Caco-2 (cell line): ENCODE measurements at regions of chr11 and their contacts with region 1.

Region 1: GRCh38 chr11:73350908-73351636 is 25.1 kb upstream of the RELT start:
- DNase-seq: peak in 1 of 2 experiments; percentile 76
- H3K4me3 ChIP-seq: no peak overlapping the region
- H3K4me3 Mint-ChIP-seq: no peak overlapping the region
- H3K27ac Mint-ChIP-seq: no peak overlapping the region
- H3K4me1 ChIP-seq: no peaks in the 10 kb centered on the region
- H3K4me1 Mint-ChIP-seq: no peaks in the 10 kb centered on the region
- H3K27me3 ChIP-seq: no peaks in the 10 kb centered on the region
- H3K27me3 Mint-ChIP-seq: no peaks in the 10 kb centered on the region
- CTCF ChIP-seq: peak; percentile 99

Region 2: DNA sequence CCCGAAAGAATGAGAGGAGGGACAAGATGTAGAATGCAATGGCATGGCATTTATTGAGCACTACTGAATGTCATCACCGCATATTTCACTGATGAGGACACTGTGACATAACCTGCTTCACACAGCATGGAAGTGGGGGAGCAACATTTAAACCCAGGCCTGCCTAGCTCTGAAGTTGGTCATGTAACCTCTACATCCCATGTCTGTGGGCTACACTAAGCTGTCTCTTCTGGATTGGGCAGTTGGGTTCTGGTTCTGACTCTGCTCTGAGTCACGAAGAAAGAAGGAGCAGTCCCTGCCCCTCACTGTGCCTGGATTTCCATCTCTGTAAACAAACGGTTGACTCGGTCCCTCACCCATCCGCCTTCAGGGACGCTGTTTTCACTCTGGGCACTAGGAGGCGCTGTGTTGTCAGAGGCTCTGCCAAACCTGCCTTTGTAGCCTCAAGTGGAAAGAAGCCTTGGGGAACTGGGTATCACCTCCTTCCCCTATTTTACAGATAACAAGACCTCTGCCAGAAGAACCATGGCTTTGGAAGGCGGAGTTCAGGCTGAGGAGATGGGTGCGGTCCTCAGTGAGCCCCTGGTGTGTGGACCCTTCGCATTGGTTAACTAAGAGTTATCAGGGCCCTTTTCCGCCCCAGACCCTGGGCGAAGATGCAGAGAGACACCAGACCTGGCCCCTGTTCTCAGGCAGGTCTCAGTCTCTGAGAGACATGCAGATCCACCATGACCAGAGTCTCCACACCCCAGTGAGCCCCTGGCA is 55.7 kb before region 1 on chr11:
- CTCF ChIA-PET with region 1: interaction called, 18 read pairs
- POLR2A ChIA-PET with region 1: no interaction called
- intact Hi-C with region 1: no loop called
- DNase-seq: peak; percentile 73 to 86
- H3K4me3 ChIP-seq: no peak overlapping the region
- H3K4me3 Mint-ChIP-seq: no peak overlapping the region
- H3K27ac Mint-ChIP-seq: no peak overlapping the region
- H3K4me1 ChIP-seq: peaks cover 23% of the 10 kb centered on the region
- H3K4me1 Mint-ChIP-seq: peaks cover 10% of the 10 kb centered on the region
- H3K27me3 ChIP-seq: no peaks in the 10 kb centered on the region
- H3K27me3 Mint-ChIP-seq: no peaks in the 10 kb centered on the region
- CTCF ChIP-seq: peak; percentile 95 to 97

Region 3: GRCh38 chr11:73314117-73314961 is 36.7 kb before region 1 on chr11:
- CTCF ChIA-PET with region 1: interaction called, 21 read pairs
- POLR2A ChIA-PET with region 1: interaction called, 4 read pairs
- intact Hi-C with region 1: no loop called
- DNase-seq: peak; percentile 88 to 93
- H3K4me3 ChIP-seq: no peak overlapping the region
- H3K4me3 Mint-ChIP-seq: peak overlapping the region; percentile 4
- H3K27ac Mint-ChIP-seq: peak overlapping the region; percentile 35
- H3K4me1 ChIP-seq: peaks cover 51% of the 10 kb centered on the region
- H3K4me1 Mint-ChIP-seq: peaks cover 32% of the 10 kb centered on the region
- H3K27me3 ChIP-seq: no peaks in the 10 kb centered on the region
- H3K27me3 Mint-ChIP-seq: no peaks in the 10 kb centered on the region
- CTCF ChIP-seq: no peak

Region 4: GRCh38 chr11:73335204-73335923 is 15.7 kb before region 1 on chr11:
- CTCF ChIA-PET with region 1: interaction called, 52 read pairs
- POLR2A ChIA-PET with region 1: interaction called, 4 read pairs
- intact Hi-C with region 1: no loop called
- DNase-seq: peak; percentile 91 to 96
- H3K4me3 ChIP-seq: no peak overlapping the region
- H3K4me3 Mint-ChIP-seq: no peak overlapping the region
- H3K27ac Mint-ChIP-seq: peak overlapping the region; percentile 19
- H3K4me1 ChIP-seq: peaks cover 52% of the 10 kb centered on the region
- H3K4me1 Mint-ChIP-seq: peaks cover 36% of the 10 kb centered on the region
- H3K27me3 ChIP-seq: no peaks in the 10 kb centered on the region
- H3K27me3 Mint-ChIP-seq: no peaks in the 10 kb centered on the region
- CTCF ChIP-seq: peak; percentile 100

Region 5: GRCh38 chr11:73365352-73366264 is 14.5 kb after region 1 on chr11:
- CTCF ChIA-PET with region 1: interaction called, 77 read pairs
- POLR2A ChIA-PET with region 1: no interaction called
- intact Hi-C with region 1: no loop called
- DNase-seq: no peak
- H3K4me3 ChIP-seq: no peak overlapping the region
- H3K4me3 Mint-ChIP-seq: no peak overlapping the region
- H3K27ac Mint-ChIP-seq: no peak overlapping the region
- H3K4me1 ChIP-seq: no peaks in the 10 kb centered on the region
- H3K4me1 Mint-ChIP-seq: no peaks in the 10 kb centered on the region
- H3K27me3 ChIP-seq: no peaks in the 10 kb centered on the region
- H3K27me3 Mint-ChIP-seq: no peaks in the 10 kb centered on the region
- CTCF ChIP-seq: no peak

Region 6: DNA sequence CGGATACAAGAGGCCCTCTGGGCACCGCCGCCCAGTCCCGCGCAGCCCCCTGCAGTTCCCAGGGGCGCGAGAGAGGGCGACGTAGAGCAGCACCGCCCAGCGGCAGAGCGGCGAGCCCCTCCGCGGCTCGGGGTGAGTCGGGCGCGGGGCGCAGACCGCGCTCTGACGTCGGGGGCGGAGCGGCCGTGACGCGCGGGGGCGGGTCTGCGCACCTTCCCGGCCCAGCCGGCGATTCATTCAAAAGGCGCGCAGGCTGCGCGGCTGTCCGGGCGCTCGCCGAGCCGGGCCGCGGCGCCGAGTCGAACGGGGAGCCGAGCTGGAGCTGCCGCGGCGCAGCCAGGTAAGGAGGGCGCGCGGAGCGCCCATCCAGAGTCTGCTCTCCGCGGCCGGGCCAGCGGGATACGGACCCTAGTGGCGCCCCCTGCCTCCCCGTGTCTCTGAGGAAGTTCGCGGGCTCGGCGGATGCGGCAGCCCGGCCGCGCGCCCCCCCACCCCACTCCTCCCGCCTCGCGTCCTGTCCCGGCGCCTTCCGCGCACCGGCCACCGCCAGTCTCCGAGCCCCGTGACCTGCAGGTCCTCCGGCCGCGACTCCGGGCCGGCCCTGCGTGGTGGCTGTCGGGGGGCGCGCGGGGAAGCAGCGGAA is 25.2 kb after region 1 on chr11 and contains the start of gene RELT:
- CTCF ChIA-PET with region 1: interaction called, 10 read pairs
- POLR2A ChIA-PET with region 1: no interaction called
- intact Hi-C with region 1: no loop called
- DNase-seq: peak; percentile 92 to 99
- H3K4me3 ChIP-seq: peak within 1 kb of the TSS; percentile 91
- H3K4me3 Mint-ChIP-seq: peak within 1 kb of the TSS; percentile 83
- H3K27ac Mint-ChIP-seq: peak within 1 kb of the TSS; percentile 37
- H3K4me1 ChIP-seq: peaks cover 11% of the 10 kb centered on the region; the same call in 1 of the 2 replicates
- H3K4me1 Mint-ChIP-seq: peaks cover 18% of the 10 kb centered on the region
- H3K27me3 ChIP-seq: no peaks in the 10 kb centered on the region
- H3K27me3 Mint-ChIP-seq: no peaks in the 10 kb centered on the region
- CTCF ChIP-seq: peak; percentile 96 to 98
- total RNA-seq, gene RELT: 11.7 and 12.7 TPM in 2 replicates

Region 7: DNA sequence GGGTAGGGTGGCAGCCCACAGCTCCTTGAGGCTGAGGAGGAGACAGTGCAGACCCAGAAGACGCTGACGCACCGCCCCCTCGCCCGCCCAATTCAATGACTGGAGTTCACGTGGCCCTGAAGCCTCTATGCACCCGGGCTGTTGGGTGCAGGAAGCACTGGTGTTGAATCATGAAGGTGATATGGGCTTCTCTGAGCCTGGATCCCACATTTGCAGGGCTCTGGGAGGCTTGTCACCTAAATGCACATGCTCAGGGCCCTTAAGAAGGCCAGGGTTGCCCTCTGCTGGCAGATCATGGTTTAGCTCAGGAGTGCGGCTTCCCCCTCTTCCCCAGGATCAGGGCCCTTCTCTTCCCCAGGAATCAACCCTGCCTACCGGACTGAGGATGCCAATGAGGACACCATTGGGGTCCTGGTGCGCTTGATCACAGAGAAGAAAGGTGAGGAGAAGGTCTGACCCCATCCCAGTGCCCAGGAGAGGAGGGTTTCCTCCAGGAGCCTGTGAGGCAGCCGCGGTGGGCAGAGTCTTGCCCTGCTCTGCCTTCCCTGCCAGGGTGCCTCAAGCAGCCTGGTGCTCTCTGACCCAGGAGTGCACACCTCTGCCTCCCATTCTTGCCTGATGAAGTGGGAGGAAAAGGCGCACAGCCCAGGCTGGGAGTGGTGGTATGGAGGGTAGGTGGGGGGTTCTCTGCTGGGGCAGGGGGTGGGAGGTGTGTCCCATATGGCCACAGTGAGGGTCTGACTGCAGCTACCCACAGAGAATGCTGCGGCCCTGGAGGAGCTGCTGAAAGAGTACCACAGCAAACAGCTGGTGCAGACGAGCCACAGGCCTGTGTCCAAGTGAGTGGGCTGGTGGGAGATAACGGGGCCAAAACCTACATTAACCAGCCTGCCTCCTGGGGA is 42.7 kb after region 1 on chr11:
- CTCF ChIA-PET with region 1: interaction called, 87 read pairs
- POLR2A ChIA-PET with region 1: no interaction called
- intact Hi-C with region 1: loop called (anchors 1 kb)
- DNase-seq: peak; percentile 85 to 89
- H3K4me3 ChIP-seq: no peak overlapping the region
- H3K4me3 Mint-ChIP-seq: no peak overlapping the region
- H3K27ac Mint-ChIP-seq: no peak overlapping the region
- H3K4me1 ChIP-seq: no peaks in the 10 kb centered on the region
- H3K4me1 Mint-ChIP-seq: no peaks in the 10 kb centered on the region
- H3K27me3 ChIP-seq: no peaks in the 10 kb centered on the region
- H3K27me3 Mint-ChIP-seq: no peaks in the 10 kb centered on the region
- CTCF ChIP-seq: peak; percentile 92 to 97

Region 8: DNA sequence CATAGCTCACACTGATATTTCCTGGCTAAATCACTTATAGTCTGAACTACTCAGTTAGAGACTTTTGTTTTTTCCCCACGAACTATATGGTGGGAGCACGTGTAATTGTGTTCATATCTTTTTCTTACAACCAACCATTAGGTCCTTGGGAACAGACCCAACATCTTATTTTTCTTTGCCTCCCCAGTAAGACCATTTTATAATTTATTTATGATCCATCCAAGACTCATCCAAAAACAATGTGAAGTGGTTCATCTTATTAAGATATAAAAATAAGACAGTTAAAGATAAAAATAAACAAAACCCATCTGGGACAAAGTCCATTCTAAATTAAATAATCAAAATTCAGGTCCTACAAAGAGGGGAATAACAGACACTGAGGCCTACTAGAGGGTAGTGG is 156.0 kb after region 1 on chr11:
- CTCF ChIA-PET with region 1: no interaction called
- POLR2A ChIA-PET with region 1: no interaction called
- intact Hi-C with region 1: no loop called
- DNase-seq: no peak
- H3K4me3 ChIP-seq: no peak overlapping the region
- H3K4me3 Mint-ChIP-seq: no peak overlapping the region
- H3K27ac Mint-ChIP-seq: no peak overlapping the region
- H3K4me1 ChIP-seq: no peaks in the 10 kb centered on the region
- H3K4me1 Mint-ChIP-seq: peaks cover 6% of the 10 kb centered on the region
- H3K27me3 ChIP-seq: no peaks in the 10 kb centered on the region
- H3K27me3 Mint-ChIP-seq: no peaks in the 10 kb centered on the region
- CTCF ChIP-seq: no peak